Dendritic cell treated with granulocyte-macrophage colony-stimulating factor and Interleukin-4, amounts not matched to agents 40 ng/mL and 50 ng/mL, for 4 days (primary cell): ENCODE measurements at regions of chr1 and their contacts with region 1.

Region 1: DNA sequence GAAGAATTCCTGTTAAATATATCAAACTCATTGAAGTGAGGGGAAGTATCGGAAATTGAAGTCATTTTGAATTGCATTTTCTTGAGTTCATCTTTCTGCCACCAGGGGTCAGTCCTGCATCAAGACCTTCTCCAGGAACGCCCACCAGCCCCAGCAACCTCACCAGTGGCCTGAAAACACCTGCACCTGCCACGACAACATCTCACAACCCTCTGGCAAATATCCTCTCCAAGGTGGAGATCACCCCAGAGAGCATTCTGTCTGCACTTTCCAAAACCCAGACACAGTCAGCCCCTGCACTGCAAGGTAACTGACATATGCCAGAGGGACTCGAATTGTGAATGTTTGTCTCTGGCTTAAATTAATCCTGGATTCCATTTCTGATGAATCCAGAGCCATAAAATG is 22.8 kb upstream of the TARS2 start:
- H3K4me3 Mint-ChIP-seq: no peak overlapping the region
- H3K27ac Mint-ChIP-seq: no peak overlapping the region
- H3K4me1 Mint-ChIP-seq: no peaks in the 10 kb centered on the region
- H3K27me3 Mint-ChIP-seq: no peaks in the 10 kb centered on the region

Region 2: DNA sequence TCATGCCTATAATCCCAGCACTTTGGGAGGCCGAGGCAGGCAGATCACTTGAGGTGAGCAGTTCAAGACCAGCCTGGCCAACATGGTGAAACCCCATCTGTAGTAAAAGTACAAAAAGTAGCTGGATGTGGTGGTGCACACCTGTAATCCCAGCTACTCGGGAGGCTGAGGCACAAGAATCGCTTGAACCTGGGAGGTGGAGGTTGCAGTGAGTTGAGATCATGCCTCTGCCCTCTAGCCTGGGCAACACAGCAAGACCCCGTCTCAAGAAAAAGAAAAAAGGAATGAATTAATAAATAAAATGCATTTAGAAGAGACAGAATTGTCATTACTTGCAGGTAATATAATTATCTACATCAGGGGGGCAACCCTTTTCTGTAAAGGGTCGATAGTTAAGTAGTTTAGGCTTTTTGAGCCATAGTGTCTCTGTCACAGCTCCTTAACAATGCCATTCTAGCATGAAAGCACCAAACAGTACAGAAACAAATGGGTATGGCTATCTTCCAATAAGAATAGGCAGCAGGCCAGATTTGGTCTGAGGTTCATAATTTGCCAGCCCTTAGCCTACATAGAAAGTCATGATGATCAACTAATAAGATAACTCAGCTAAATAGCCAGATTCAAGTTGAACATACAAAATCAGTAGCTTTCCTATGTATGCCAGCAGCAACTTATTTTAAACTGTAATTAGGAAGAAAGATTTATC is 43.7 kb before region 1 on chr1:
- intact Hi-C with region 1: no loop called
- H3K4me3 Mint-ChIP-seq: no peak overlapping the region
- H3K27ac Mint-ChIP-seq: no peak overlapping the region
- H3K4me1 Mint-ChIP-seq: peaks cover 7% of the 10 kb centered on the region
- H3K27me3 Mint-ChIP-seq: no peaks in the 10 kb centered on the region

Region 3: GRCh38 chr1:150532868-150533302 is 68.5 kb after region 1 on chr1:
- intact Hi-C with region 1: loop called (anchors 1 kb)
- H3K4me3 Mint-ChIP-seq: no peak overlapping the region
- H3K27ac Mint-ChIP-seq: no peak overlapping the region
- H3K4me1 Mint-ChIP-seq: peaks cover 7% of the 10 kb centered on the region
- H3K27me3 Mint-ChIP-seq: no peaks in the 10 kb centered on the region

Region 4: GRCh38 chr1:150552093-150552691 is 87.8 kb after region 1 on chr1:
- intact Hi-C with region 1: loop called (anchors 5 kb)
- H3K4me3 Mint-ChIP-seq: peak overlapping the region; percentile 99
- H3K27ac Mint-ChIP-seq: peak overlapping the region; percentile 99
- H3K4me1 Mint-ChIP-seq: peaks cover 63% of the 10 kb centered on the region
- H3K27me3 Mint-ChIP-seq: no peaks in the 10 kb centered on the region

Region 5: GRCh38 chr1:150621497-150622302 is 157.3 kb after region 1 on chr1:
- intact Hi-C with region 1: loop called (anchors 5 kb)
- H3K4me3 Mint-ChIP-seq: peak overlapping the region; percentile 32
- H3K27ac Mint-ChIP-seq: peak overlapping the region; percentile 62
- H3K4me1 Mint-ChIP-seq: peaks cover 70% of the 10 kb centered on the region
- H3K27me3 Mint-ChIP-seq: no peaks in the 10 kb centered on the region